A673 (cell line): ENCODE measurements at regions of chr20 and their contacts with region 1.

Region 1: DNA sequence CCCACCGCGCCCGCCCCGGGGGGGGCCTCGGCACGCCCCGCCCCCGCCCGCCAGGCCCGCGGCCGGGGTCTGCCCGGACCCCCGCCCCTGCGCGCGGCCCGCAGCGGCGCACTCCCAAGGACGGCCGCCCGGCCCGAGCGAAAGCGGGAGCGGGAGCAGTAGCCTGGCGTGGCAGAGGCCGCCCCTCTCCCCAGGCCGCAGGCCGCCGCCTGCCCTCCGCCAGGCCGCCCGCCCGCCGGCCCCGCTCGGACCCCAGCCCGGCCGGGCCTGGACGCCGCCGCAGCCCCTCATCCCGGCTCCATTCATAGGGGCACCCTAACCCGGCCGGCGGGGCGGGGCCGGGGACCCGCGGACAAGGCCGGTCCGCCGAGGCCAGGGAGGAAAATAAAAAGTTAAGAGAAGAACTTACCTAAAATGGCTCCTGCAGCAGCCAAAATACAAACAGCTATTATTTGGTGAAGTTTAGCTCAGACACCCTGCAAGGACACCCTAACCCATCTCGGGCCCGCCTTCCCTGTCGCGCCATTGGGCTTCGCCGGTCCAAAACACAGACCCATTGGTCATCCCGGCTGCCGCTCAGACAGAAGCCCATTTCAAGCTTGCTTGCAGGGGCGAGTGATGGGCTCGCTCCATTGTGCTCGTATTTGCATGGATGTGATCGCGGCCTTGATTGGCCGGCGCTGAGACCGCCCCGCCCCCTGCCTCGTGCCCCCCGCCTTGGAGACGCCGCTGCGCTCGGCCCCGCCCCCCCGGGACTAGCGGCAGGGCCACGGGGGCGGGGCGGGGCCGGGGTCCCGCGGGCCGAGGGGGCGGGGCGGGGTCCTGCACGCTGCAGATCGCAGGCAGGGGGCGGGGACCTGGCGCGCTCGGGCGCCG is at the start of gene CHD6:
- DNase-seq: peak; percentile 100
- H3K4me3 ChIP-seq: peak within 1 kb of the TSS; percentile 66
- H3K27ac ChIP-seq: peak within 1 kb of the TSS; percentile 84
- H3K4me1 ChIP-seq: peaks cover 43% of the 10 kb centered on the region
- H3K27me3 ChIP-seq: no peaks in the 10 kb centered on the region
- CTCF ChIP-seq: no peak
- total RNA-seq, gene CHD6: 46.7 and 58.0 TPM in 2 replicates

Region 2: DNA sequence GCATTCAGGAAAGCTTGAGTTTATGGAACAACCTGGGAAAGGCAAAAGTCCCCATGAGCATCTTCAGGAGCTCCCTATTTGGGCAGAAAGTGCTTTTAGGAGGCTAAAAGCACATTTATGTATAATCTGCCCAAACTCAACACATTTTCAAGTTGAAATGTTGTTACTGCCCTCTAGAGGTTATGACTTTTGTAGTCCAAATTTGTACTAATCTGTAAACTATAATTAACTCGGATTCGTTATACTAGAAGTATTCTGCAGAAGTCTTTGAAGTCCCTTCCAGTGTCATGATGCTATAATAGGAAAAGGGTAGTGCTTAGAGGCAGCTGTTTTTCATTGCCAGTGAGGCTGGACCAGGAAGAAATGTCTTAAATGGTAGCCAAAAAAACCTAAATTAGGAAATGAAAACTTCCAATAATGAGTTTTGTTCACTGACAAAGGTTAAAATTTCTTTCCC is 206.8 kb before region 1 on chr20:
- CTCF ChIA-PET with region 1: no interaction called
- POLR2A ChIA-PET with region 1: no interaction called
- intact Hi-C with region 1: no loop called
- DNase-seq: peak; percentile 26
- H3K4me3 ChIP-seq: no peak overlapping the region
- H3K27ac ChIP-seq: no peak overlapping the region
- H3K4me1 ChIP-seq: no peaks in the 10 kb centered on the region
- H3K27me3 ChIP-seq: no peaks in the 10 kb centered on the region
- CTCF ChIP-seq: peak; percentile 56

Region 3: DNA sequence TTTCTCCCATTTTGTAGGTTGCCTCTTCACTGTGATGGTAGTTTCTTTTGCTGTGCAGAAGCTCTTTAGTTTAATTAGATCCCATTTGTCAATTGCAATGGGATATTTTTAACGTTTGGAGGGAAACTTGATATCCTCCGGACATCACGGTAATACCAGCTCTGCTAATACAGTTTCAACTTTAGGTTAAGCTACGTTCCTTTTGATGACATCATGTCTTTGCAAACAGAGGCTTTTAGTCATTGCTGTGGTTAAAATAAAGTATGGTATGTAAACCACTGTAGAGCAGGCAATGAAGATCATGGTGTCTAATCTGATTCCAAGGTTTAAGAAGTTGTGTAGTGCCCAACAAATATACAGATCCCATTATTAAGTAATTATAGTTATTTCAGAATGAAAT is 168.0 kb after region 1 on chr20:
- CTCF ChIA-PET with region 1: no interaction called
- POLR2A ChIA-PET with region 1: interaction called, 10 read pairs
- intact Hi-C with region 1: no loop called
- DNase-seq: no peak
- H3K4me3 ChIP-seq: no peak overlapping the region
- H3K27ac ChIP-seq: no peak overlapping the region
- H3K4me1 ChIP-seq: no peaks in the 10 kb centered on the region
- H3K27me3 ChIP-seq: peaks cover 8% of the 10 kb centered on the region
- CTCF ChIP-seq: no peak